Ovary (tissue), 10 donors: ENCODE measurements at regions of chr13 and their contacts with region 1.

Region 1: GRCh38 chr13:90374168-90374567 is 973.3 kb upstream of the MIR17HG start:
- DNase-seq: no peak
- H3K4me3 ChIP-seq: no peak overlapping the region
- H3K27ac ChIP-seq: no peak overlapping the region
- H3K4me1 ChIP-seq: no peaks in the 10 kb centered on the region
- H3K27me3 ChIP-seq: peaks cover 3% of the 10 kb centered on the region
- CTCF ChIP-seq: no peak
- EP300 ChIP-seq: no peak
- POLR2A ChIP-seq: no peak

Region 2: GRCh38 chr13:90135558-90135957 is 238.6 kb before region 1 on chr13:
- intact Hi-C with region 1: loop called in 1 of 4 experiments (anchors 5 kb)
- DNase-seq: no peak
- H3K4me3 ChIP-seq: no peak overlapping the region
- H3K27ac ChIP-seq: no peak overlapping the region
- H3K4me1 ChIP-seq: no peaks in the 10 kb centered on the region
- H3K27me3 ChIP-seq: no peaks in the 10 kb centered on the region
- CTCF ChIP-seq: no peak
- EP300 ChIP-seq: no peak
- POLR2A ChIP-seq: no peak

Region 3: DNA sequence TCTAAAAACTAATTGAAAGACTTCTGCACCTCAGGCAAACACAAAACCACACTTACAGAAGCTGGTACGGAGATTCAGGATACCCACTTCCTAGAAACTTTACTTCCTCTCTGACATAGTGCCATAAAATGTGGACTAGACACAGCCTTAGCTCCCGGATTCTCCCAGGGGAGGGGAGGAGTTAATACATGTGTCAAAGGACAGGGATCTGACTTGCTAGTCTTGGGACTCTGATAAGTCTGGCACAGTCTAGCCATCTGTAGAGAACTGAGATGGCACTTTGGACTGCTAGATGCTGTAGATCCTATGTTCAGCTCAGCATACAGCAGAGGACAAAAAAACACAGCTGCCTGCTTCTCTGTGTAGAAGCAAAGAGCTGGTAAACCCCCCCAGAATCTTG is 203.6 kb after region 1 on chr13:
- intact Hi-C with region 1: no loop called
- DNase-seq: no peak
- H3K4me3 ChIP-seq: no peak overlapping the region
- H3K27ac ChIP-seq: no peak overlapping the region
- H3K4me1 ChIP-seq: no peaks in the 10 kb centered on the region
- H3K27me3 ChIP-seq: no peaks in the 10 kb centered on the region
- CTCF ChIP-seq: no peak
- EP300 ChIP-seq: no peak
- POLR2A ChIP-seq: no peak

Region 4: GRCh38 chr13:91889641-91890040 is 1515.5 kb after region 1 on chr13:
- intact Hi-C with region 1: no loop called
- DNase-seq: no peak
- H3K4me3 ChIP-seq: no peak overlapping the region
- H3K27ac ChIP-seq: no peak overlapping the region
- H3K4me1 ChIP-seq: no peaks in the 10 kb centered on the region
- H3K27me3 ChIP-seq: no peaks in the 10 kb centered on the region
- CTCF ChIP-seq: no peak
- EP300 ChIP-seq: no peak
- POLR2A ChIP-seq: no peak